ENCODE measurements at regions of chr4 and their contacts with region 1.

Region 1: DNA sequence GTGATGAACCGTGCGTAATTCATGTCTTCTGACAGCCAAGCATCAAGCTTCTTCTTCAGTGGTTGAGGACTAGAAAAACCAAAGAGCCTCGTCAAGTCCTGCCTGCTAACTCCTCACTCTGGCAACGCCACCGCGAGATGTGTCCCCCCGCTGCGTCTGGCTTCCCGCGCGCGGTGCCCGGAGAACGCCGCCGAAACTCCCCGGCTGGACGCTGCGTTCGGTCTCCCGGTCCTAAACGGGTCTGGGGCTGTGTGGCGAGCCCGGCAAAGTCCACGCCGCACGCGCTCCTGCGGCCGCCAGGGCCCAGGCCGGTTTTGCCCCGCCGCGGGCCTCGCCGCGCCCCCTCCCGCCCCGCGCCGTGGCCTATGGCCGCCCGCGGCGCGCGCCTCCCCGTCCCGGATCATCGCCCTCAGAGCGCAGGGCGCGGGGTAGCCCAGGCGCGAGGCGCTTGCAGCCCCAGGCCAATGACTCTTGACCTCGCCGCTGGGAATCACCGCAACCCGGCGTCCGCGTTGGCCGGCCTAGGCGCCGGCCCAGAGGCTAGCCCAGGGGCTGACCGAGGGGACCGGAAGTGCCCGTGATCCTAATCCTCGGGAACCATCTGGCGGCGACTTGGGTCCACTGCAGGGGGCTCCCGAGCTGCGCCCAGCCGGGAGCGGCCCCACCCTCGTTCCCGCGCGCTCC is at the start of gene AADAT:
- DNase-seq: peak; percentile 72
- ATAC-seq: peak; percentile 96
- H3K4me3 ChIP-seq: peak within 1 kb of the TSS; percentile 67
- H3K27ac ChIP-seq: peak within 1 kb of the TSS; percentile 58
- H3K4me1 ChIP-seq: no peaks in the 10 kb centered on the region
- H3K27me3 ChIP-seq: no peaks in the 10 kb centered on the region
- CTCF ChIP-seq: peak; percentile 79
- POLR2A ChIP-seq: no peak
- RAD21 ChIP-seq: peak; percentile 67
- total RNA-seq, gene AADAT: 4.7 TPM in 2 replicates

Region 2: GRCh38 chr4:169810325-169811323 is 279.2 kb before region 1 on chr4:
- CTCF ChIA-PET with region 1: no interaction called
- POLR2A ChIA-PET with region 1: no interaction called
- dilution Hi-C with region 1: no loop called
- in situ Hi-C with region 1: no loop called
- intact Hi-C with region 1: loop called (anchors 1 kb)
- DNase-seq: peak; percentile 81
- ATAC-seq: peak; percentile 61
- H3K4me3 ChIP-seq: no peak overlapping the region
- H3K27ac ChIP-seq: no peak overlapping the region
- H3K4me1 ChIP-seq: no peaks in the 10 kb centered on the region
- H3K27me3 ChIP-seq: no peaks in the 10 kb centered on the region; the same call in 1 of the 2 replicates
- CTCF ChIP-seq: peak; percentile 86
- POLR2A ChIP-seq: no peak
- RAD21 ChIP-seq: peak; percentile 63

Measured in IMR-90 (cell line).